ENCODE measurements at regions of chr2 and their contacts with region 1.

Region 1: DNA sequence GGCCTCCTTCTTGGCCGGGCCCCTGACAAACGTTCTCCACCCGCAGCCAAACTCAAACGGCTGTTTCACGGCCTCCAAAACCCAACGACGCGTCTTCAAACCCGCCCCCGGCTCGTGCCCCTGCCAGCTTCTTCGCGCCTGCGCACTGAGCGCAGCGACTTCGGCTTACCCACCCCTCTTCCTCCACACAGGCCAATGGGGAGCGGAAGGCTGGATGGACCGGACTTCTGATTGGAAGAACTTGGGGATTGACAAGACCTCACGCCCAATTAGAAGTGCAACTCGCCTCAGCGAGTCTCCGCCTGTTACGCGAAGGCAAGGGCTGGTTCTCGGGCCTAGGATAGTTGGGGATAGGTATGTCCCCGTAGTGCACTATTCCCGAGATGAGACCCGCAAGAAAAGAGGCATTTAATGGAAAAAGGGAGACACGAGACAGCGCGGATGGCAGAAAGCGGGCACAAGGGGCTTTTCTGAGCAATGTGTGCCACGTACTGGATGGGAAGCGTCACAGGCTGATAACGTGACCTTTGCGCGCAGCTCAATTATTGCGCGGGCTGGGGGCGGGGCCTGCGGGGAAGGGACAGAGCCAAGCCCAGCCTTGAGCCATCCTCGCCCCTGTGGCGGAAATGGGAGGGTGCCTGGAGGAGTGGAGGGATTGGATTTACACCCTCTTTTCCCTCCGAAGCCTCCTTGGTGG is at the start of gene LAPTM4A:
- DNase-seq: peak; percentile 99
- ATAC-seq: peak; percentile 93
- H3K4me3 ChIP-seq: peak within 1 kb of the TSS; percentile 80
- H3K27ac ChIP-seq: peak within 1 kb of the TSS; percentile 99
- H3K4me1 ChIP-seq: 0 out of 2 replicates have a peak, but pooled peaks cover 11% of the 10 kb centered on the region
- H3K27me3 ChIP-seq: no peaks in the 10 kb centered on the region
- CTCF ChIP-seq: no peak
- EP300 ChIP-seq: 0 out of 4 replicates have a peak, but pooled peaks of 1 of the 2 experiments have one; percentile 38
- POLR2A ChIP-seq: peak; percentile 83
- RAD21 ChIP-seq: no peak
- polyA plus RNA-seq, gene LAPTM4A: 77.2 to 87.8 TPM

Region 2: DNA sequence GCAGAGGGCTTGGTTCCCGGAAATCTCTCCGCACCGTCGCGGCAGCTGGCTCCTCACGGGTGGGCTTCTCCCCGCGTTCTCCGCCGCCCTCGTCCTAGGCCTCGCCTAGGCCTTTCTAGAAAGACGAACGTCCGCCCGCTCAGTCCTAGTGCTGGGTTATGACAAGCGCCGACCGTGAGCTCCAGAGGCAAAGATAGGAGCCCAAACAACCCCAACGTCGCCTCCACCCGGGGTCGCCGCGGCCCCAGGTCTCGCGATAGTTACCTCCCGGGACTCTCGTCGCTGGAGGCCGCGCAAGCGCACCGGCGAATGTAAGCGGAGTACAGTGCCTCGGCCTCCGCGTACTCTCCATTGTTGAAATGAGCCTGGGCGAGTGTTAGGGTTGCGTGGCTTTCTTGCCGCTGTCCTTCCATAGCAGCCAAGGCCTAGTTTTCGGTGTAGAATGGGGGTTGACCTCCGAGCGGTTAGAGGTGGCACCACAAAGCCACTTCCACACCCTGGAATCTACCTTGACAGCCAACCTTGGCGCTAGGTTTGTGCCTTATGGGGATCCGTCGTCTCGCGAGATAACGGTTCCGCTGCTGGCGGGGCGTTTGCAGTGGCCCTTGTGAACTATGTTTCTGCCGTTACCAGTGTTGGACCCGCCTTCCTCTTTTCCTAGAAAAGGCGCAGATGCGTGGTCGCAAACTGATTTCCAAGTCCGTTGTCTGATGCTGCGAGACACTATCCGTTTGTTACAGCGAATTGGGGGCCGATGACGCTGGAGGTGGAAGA is 150.1 kb before region 1 on chr2 and contains the start of gene TTC32:
- CTCF ChIA-PET with region 1: interaction called, 3 read pairs
- POLR2A ChIA-PET with region 1: interaction called, 5 read pairs
- RAD21 ChIA-PET with region 1: no interaction called
- SMC1A ChIA-PET with region 1: interaction called, 9 read pairs
- in situ Hi-C with region 1: no loop called
- intact Hi-C with region 1: loop called (anchors 5 kb)
- DNase-seq: peak; percentile 82
- ATAC-seq: peak; percentile 86
- H3K4me3 ChIP-seq: peak within 1 kb of the TSS; percentile 85
- H3K27ac ChIP-seq: peak within 1 kb of the TSS; percentile 99
- H3K4me1 ChIP-seq: peaks cover 8% of the 10 kb centered on the region
- H3K27me3 ChIP-seq: no peaks in the 10 kb centered on the region
- CTCF ChIP-seq: no peak
- EP300 ChIP-seq: peak in 1 of 2 experiments; percentile 6; a peak in 1 of 4 replicates
- POLR2A ChIP-seq: peak; percentile 98
- RAD21 ChIP-seq: no peak
- polyA plus RNA-seq, gene TTC32: 21.6 to 25.3 TPM

Region 3: DNA sequence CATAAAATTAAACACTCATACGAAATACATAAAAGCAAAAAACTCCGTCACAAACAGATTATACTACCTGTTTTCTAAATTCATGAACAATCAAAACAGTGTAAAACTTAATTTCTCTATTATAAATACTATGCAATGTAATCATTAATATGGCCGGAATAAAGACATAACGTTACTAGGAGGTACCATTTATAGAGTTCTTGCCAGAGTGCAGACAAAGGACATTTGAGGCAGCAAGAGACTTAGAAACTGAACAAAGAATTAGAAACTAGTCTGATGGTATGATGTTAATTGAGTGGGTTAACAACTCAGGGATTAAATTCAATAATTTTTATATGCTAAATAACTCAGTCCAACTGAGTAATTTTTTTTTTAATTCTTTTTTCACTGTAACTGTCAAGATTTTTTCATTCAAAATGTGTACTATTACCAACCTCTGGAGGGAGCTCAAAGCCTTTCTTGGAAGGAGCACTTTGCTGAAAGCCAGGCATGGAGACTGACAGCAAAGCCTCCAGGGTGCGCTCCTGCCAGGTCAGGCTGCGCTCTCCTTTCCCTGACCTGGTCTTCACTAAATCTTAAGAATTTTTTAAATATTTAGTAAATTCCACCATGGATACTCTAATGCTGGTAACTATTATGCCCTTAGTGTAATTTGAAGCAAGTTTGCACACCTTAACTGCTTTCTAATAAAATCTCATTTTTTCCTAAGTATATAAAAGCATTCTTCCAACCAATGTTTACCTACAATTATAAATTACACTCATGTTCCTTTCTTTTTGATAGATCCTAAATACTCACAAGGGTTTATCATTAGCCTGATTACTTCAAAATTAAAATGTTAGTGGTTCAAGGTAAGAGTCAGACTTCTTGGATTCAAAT is 95.9 kb before region 1 on chr2:
- CTCF ChIA-PET with region 1: interaction called, 20 read pairs
- POLR2A ChIA-PET with region 1: no interaction called
- RAD21 ChIA-PET with region 1: interaction called, 7 read pairs
- SMC1A ChIA-PET with region 1: interaction called, 8 read pairs
- in situ Hi-C with region 1: no loop called
- intact Hi-C with region 1: no loop called
- DNase-seq: peak; percentile 24
- ATAC-seq: peak; percentile 100
- H3K4me3 ChIP-seq: no peak overlapping the region
- H3K27ac ChIP-seq: no peak overlapping the region
- H3K4me1 ChIP-seq: no peaks in the 10 kb centered on the region
- H3K27me3 ChIP-seq: no peaks in the 10 kb centered on the region
- CTCF ChIP-seq: peak; percentile 79 to 98 (median 82)
- EP300 ChIP-seq: no peak
- POLR2A ChIP-seq: no peak
- RAD21 ChIP-seq: peak; percentile 91

Region 4: DNA sequence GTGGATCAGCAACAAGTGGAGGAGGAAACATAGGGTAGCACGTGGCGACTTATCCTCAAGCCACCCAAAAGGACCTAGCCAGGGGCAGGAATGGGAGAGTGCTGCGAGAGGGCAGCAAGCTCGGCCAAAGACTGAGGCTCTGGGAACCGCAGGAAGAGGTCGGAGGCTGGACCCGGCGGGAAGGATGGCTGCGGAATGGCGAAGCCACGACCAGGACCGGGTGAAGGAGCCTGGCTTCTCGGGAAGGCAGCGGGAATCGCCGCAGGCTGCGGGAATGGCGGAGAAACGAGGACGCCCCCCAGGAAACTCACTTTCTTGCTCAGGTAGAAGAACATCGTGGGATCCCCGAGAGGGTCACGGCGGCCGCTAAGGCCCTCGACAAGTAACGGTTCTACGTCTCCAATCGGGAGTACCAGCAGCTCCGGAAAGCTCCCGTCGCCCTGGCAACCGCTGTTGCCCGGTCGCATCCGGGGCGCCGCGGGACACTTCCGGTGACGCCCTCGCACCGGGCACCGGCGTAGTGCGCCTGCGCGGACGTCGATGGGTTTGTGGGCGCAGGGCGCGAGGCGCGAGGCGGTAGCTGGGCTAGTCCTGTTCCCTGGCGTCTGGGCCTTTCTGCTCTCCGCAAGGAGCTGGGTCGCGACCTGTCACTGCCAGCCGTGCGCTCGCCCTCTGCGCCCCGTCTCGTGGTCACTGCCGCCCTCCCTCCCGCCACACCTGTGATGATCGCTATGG is 61.8 kb before region 1 on chr2 and contains the start of gene WDR35:
- CTCF ChIA-PET with region 1: interaction called, 14 read pairs
- POLR2A ChIA-PET with region 1: interaction called, 4 read pairs
- RAD21 ChIA-PET with region 1: interaction called, 5 read pairs
- SMC1A ChIA-PET with region 1: interaction called, 19 read pairs
- in situ Hi-C with region 1: no loop called
- intact Hi-C with region 1: no loop called
- DNase-seq: peak; percentile 53
- ATAC-seq: peak; percentile 94
- H3K4me3 ChIP-seq: peak within 1 kb of the TSS; percentile 95
- H3K27ac ChIP-seq: peak within 1 kb of the TSS; percentile 28; the same call in 1 of the 2 replicates
- H3K4me1 ChIP-seq: peaks cover 6% of the 10 kb centered on the region; the same call in 1 of the 2 replicates
- H3K27me3 ChIP-seq: no peaks in the 10 kb centered on the region
- CTCF ChIP-seq: no peak
- EP300 ChIP-seq: no peak; a peak in 1 of 4 replicates
- POLR2A ChIP-seq: peak; percentile 80
- RAD21 ChIP-seq: no peak
- polyA plus RNA-seq, gene WDR35: 3.0 to 3.2 TPM

Region 5: DNA sequence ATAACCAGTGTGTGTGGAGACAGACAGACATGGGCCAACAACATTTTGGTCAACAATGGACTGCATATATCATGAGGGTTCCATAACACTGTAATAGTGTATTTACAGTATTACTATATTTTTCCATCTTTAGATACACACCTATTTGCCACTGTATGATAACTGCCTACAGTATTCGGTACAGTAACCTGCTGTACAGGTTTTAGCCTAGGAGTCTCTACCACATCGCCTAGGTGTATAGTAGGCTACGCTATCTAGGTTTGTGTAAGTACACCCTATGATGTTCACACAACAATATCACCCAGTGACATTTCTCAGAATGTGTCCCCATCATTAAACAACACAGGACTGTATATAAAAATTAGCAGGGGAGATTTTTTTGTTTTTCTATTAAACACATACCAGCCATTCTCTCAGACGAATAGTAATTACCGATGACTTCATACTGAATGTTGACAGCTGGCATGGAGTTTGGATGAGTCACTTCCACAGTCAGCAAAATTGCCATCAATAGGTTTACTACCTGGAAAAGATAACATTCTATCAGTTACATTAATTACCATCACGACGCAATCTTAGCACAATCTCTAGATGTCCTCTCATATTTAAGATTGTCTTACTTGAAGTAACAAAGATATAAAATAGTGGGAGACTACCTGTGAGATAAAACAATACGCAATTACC is 11.0 kb before region 1 on chr2:
- CTCF ChIA-PET with region 1: interaction called, 11 read pairs
- POLR2A ChIA-PET with region 1: interaction called, 6 read pairs
- RAD21 ChIA-PET with region 1: interaction called, 12 read pairs
- SMC1A ChIA-PET with region 1: interaction called, 31 read pairs
- in situ Hi-C with region 1: no loop called
- intact Hi-C with region 1: no loop called
- DNase-seq: no peak
- ATAC-seq: no peak
- H3K4me3 ChIP-seq: no peak overlapping the region
- H3K27ac ChIP-seq: no peak overlapping the region
- H3K4me1 ChIP-seq: peaks cover 3% of the 10 kb centered on the region; the same call in 1 of the 2 replicates
- H3K27me3 ChIP-seq: no peaks in the 10 kb centered on the region
- CTCF ChIP-seq: no peak
- EP300 ChIP-seq: no peak
- POLR2A ChIP-seq: no peak
- RAD21 ChIP-seq: no peak

Region 6: GRCh38 chr2:20062615-20063545 is 11.2 kb after region 1 on chr2:
- CTCF ChIA-PET with region 1: interaction called, 4 read pairs
- POLR2A ChIA-PET with region 1: interaction called, 17 read pairs
- RAD21 ChIA-PET with region 1: no interaction called
- SMC1A ChIA-PET with region 1: interaction called, 10 read pairs
- in situ Hi-C with region 1: no loop called
- intact Hi-C with region 1: no loop called
- DNase-seq: no peak
- ATAC-seq: peak; percentile 49
- H3K4me3 ChIP-seq: no peak overlapping the region
- H3K27ac ChIP-seq: no peak overlapping the region
- H3K4me1 ChIP-seq: no peaks in the 10 kb centered on the region
- H3K27me3 ChIP-seq: no peaks in the 10 kb centered on the region; a peak in 1 of 4 replicates
- CTCF ChIP-seq: no peak
- EP300 ChIP-seq: no peak
- POLR2A ChIP-seq: no peak
- RAD21 ChIP-seq: no peak

Region 7: DNA sequence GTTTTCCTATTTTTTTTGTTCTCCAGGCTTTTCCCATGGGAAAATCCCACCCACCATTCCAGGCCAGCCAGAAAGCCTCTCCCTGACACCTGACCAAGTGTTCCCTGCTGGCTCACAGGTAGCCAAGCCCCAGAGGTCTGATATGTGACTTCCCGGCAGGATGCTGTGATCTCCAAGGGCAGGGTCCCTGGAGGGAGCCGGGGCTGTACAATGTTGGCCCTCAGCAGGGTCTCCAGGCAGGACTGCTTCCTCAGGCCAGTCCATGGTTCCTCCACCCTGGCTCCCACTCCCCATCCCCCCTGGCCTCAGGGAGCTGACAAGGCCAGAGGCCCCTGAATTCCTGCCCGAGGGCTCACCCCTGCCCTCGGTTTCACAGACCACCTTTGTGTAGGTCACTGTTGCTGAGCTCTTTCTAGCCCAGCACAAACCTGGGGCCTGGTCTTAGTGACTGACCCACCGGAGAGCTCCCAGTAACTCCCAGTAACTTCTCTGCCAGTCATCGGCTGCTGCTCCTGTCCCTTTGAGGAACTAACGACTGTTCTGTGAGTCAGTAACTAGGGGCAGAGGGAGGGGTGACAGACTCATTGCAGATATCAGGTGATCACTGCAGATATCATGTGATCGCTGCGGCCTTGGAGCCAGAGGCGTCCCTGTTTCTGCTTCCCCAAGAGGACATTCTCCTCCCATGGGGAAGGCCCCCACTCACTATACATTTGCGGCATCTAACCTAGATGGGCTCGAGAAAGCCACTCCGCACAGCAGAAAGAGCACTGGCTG is 134.6 kb after region 1 on chr2:
- CTCF ChIA-PET with region 1: no interaction called
- POLR2A ChIA-PET with region 1: no interaction called
- RAD21 ChIA-PET with region 1: no interaction called
- SMC1A ChIA-PET with region 1: no interaction called
- in situ Hi-C with region 1: no loop called
- intact Hi-C with region 1: no loop called
- DNase-seq: no peak
- ATAC-seq: peak; percentile 72
- H3K4me3 ChIP-seq: no peak overlapping the region
- H3K27ac ChIP-seq: no peak overlapping the region
- H3K4me1 ChIP-seq: peaks cover 14% of the 10 kb centered on the region
- H3K27me3 ChIP-seq: no peaks in the 10 kb centered on the region; a peak in 1 of 4 replicates
- CTCF ChIP-seq: no peak
- EP300 ChIP-seq: no peak; a peak in 1 of 4 replicates
- POLR2A ChIP-seq: 0 out of 2 replicates have a peak, but pooled peaks have one; percentile 42
- RAD21 ChIP-seq: no peak

Region 8: DNA sequence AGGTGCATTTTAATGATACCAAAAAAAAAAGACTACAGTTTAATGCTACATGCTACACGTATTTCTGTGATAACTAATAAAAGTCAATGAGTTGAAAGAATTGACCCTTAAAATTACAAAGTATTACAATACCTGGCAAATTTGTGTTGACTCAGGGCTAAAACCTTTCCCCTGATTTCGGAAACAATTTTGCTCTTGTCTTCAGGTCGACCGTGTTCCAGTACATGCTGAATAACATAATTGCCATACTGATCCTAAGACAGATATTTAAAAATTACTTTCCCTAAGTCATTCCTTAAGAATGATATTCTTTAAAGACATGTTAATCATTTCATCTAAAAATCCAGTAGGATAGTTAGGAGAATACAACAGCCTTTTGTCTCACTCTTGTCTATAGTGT is 203.1 kb after region 1 on chr2:
- CTCF ChIA-PET with region 1: no interaction called
- POLR2A ChIA-PET with region 1: no interaction called
- RAD21 ChIA-PET with region 1: no interaction called
- SMC1A ChIA-PET with region 1: no interaction called
- in situ Hi-C with region 1: no loop called
- intact Hi-C with region 1: no loop called
- DNase-seq: no peak
- ATAC-seq: no peak
- H3K4me3 ChIP-seq: no peak overlapping the region
- H3K27ac ChIP-seq: no peak overlapping the region
- H3K4me1 ChIP-seq: no peaks in the 10 kb centered on the region
- H3K27me3 ChIP-seq: no peaks in the 10 kb centered on the region
- CTCF ChIP-seq: no peak
- EP300 ChIP-seq: no peak
- POLR2A ChIP-seq: no peak
- RAD21 ChIP-seq: no peak